MCF 10A (cell line): ENCODE measurements at regions of chr6 and their contacts with region 1.

Region 1: GRCh38 chr6:42726485-42727086 is 4.2 kb upstream of the PRPH2 start:
- DNase-seq: peak; percentile 87
- H3K4me3 Mint-ChIP-seq: peak overlapping the region; percentile 11
- H3K27ac Mint-ChIP-seq: no peak overlapping the region
- H3K4me1 Mint-ChIP-seq: no peaks in the 10 kb centered on the region
- H3K27me3 Mint-ChIP-seq: peaks cover 5% of the 10 kb centered on the region
- CTCF ChIP-seq: peak; percentile 74

Region 2: GRCh38 chr6:42661540-42662153 is 64.9 kb before region 1 on chr6:
- CTCF ChIA-PET with region 1: interaction called, 40 read pairs
- POLR2A ChIA-PET with region 1: interaction called, 5 read pairs
- intact Hi-C with region 1: loop called (anchors 1 kb)
- DNase-seq: peak; percentile 82
- H3K4me3 Mint-ChIP-seq: no peak overlapping the region
- H3K27ac Mint-ChIP-seq: no peak overlapping the region
- H3K4me1 Mint-ChIP-seq: no peaks in the 10 kb centered on the region
- H3K27me3 Mint-ChIP-seq: no peaks in the 10 kb centered on the region
- CTCF ChIP-seq: peak; percentile 78

Region 3: GRCh38 chr6:42692137-42692911 is 34.3 kb before region 1 on chr6:
- CTCF ChIA-PET with region 1: interaction called, 19 read pairs
- POLR2A ChIA-PET with region 1: interaction called, 6 read pairs
- intact Hi-C with region 1: loop called (anchors 2 kb)
- DNase-seq: peak; percentile 63
- H3K4me3 Mint-ChIP-seq: no peak overlapping the region
- H3K27ac Mint-ChIP-seq: peak overlapping the region; percentile 39
- H3K4me1 Mint-ChIP-seq: peaks cover 19% of the 10 kb centered on the region
- H3K27me3 Mint-ChIP-seq: no peaks in the 10 kb centered on the region
- CTCF ChIP-seq: no peak

Region 4: DNA sequence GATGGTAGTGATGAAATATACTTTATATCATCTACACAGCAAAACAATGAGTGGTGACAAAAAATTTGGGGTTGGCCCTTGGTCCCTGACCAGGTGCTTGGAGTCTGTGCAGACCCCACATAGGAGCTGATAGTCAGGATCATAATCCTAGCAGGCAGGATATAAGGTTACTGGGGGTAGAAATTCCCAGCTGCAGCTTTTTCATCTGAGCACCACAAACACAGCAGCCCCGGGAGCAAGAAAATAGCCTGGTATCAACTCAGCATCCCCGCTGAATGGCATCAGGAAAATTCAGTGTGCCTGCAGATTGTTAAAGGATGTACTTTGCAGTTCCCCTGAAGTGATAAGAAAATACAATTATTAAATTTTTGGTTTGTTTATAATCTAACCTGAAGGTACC is 125.0 kb after region 1 on chr6:
- CTCF ChIA-PET with region 1: no interaction called
- POLR2A ChIA-PET with region 1: no interaction called
- intact Hi-C with region 1: no loop called
- DNase-seq: no peak
- H3K4me3 Mint-ChIP-seq: no peak overlapping the region
- H3K27ac Mint-ChIP-seq: no peak overlapping the region
- H3K4me1 Mint-ChIP-seq: no peaks in the 10 kb centered on the region
- H3K27me3 Mint-ChIP-seq: no peaks in the 10 kb centered on the region
- CTCF ChIP-seq: no peak